HepG2 (cell line): ENCODE measurements at regions of chr6 and their contacts with region 1.

Region 1: GRCh38 chr6:79813854-79814709 is 133.3 kb downstream of the ELOVL4 start:
- DNase-seq: peak; percentile 54
- ATAC-seq: peak; percentile 85
- H3K4me3 ChIP-seq: no peak overlapping the region
- H3K27ac ChIP-seq: no peak overlapping the region
- H3K4me1 ChIP-seq: no peaks in the 10 kb centered on the region
- H3K27me3 ChIP-seq: peaks cover 0 to 23% of the 10 kb centered on the region in 2 experiments; a peak in 2 of 5 replicates
- CTCF ChIP-seq: peak; percentile 79
- EP300 ChIP-seq: no peak
- POLR2A ChIP-seq: no peak
- RAD21 ChIP-seq: 0 out of 2 replicates have a peak, but pooled peaks have one; percentile 29

Region 2: DNA sequence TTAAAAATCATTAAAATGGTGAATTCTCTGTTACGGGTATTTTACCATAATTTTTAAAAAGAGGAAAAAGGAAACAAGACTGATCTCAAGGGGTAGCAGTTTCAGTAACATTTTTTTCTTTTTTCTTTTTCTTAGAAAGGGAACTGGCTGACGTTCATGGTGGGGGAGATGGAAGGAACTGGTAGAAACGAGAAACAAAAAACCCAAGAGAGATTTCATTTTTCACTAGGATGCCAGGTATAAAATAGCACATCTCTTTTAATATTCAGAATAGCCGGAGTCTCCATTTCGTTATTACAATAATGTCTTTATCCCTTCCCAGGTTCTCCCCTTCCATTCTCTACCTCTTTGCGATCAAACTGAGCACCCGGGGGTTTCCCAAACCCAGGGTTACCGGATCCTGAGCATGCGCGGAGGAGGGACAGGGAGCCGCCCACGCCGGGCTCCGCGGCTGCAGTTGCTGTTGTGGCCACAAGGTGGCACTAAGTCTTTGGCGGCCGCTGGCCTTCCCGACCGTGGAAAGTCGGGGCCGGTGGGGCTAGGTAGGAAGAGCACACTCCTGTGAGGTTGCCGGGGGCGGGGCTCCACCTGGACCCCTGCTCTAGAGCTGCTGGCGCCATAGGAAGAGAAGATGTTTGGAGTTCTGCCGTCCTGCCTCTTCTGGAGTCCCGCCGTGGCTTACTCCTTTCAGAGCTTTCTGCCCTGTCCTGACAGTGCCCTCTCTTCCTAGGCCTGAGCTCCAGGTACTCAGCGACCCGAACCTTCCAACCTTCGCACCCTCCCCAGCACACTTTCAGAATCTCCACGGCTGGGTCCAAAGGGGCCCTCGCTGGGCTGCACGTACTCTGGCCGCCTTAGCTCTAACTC is 36.1 kb before region 1 on chr6:
- CTCF ChIA-PET with region 1: interaction called, 28 read pairs
- POLR2A ChIA-PET with region 1: no interaction called
- in situ Hi-C with region 1: no loop called
- intact Hi-C with region 1: loop called (anchors 1 kb)
- DNase-seq: peak; percentile 43
- ATAC-seq: peak; percentile 94
- H3K4me3 ChIP-seq: peak overlapping the region; percentile 41 to 75 (median 48)
- H3K27ac ChIP-seq: no peak overlapping the region
- H3K4me1 ChIP-seq: peaks cover 18% of the 10 kb centered on the region
- H3K27me3 ChIP-seq: peaks cover 0 to 16% of the 10 kb centered on the region in 2 experiments; a peak in 1 of 5 replicates
- CTCF ChIP-seq: peak; percentile 97
- EP300 ChIP-seq: no peak
- POLR2A ChIP-seq: no peak
- RAD21 ChIP-seq: peak; percentile 65

Region 3: DNA sequence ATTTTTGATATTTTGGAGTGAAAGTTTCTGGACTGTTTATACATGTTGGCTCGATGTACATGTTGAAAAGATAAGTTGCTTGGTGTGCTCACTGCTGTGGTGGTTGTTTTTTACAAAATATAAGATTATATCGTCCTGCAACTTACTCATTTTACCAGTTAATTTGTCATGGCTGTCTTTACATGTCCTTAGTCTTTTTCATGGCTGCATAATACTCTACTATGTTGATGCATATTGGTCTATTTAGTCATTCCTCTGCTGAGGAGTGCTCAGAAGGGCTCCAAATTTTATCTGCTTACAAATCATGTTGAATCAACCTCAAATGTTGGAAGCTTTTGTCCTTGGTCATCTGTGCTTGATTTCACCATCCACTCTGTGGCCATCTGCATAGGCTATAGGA is 457.0 kb after region 1 on chr6:
- CTCF ChIA-PET with region 1: no interaction called
- POLR2A ChIA-PET with region 1: no interaction called
- in situ Hi-C with region 1: no loop called
- intact Hi-C with region 1: loop called (anchors 5 kb)
- DNase-seq: no peak
- ATAC-seq: no peak
- H3K4me3 ChIP-seq: no peak overlapping the region
- H3K27ac ChIP-seq: no peak overlapping the region
- H3K4me1 ChIP-seq: no peaks in the 10 kb centered on the region
- H3K27me3 ChIP-seq: no peaks in the 10 kb centered on the region
- CTCF ChIP-seq: no peak
- EP300 ChIP-seq: no peak
- POLR2A ChIP-seq: no peak
- RAD21 ChIP-seq: no peak